Mammary epithelial cell (primary cell): ENCODE measurements at regions of chr11 and their contacts with region 1.

Region 1: GRCh38 chr11:126310228-126310991 is 6.5 kb downstream of the DCPS start:
- DNase-seq: peak; percentile 50
- H3K4me3 ChIP-seq: no peak overlapping the region
- H3K27ac ChIP-seq: no peak overlapping the region
- H3K4me1 ChIP-seq: peaks cover 22% of the 10 kb centered on the region
- H3K27me3 ChIP-seq: no peaks in the 10 kb centered on the region
- CTCF ChIP-seq: peak; percentile 86 to 93

Region 2: GRCh38 chr11:126212089-126212660 is 98.2 kb before region 1 on chr11:
- CTCF ChIA-PET with region 1: no interaction called
- dilution Hi-C with region 1: no loop called
- in situ Hi-C with region 1: no loop called
- intact Hi-C with region 1: no loop called
- DNase-seq: peak; percentile 4
- H3K4me3 ChIP-seq: peak overlapping the region; percentile 87 to 100 (median 99)
- H3K27ac ChIP-seq: peak overlapping the region; percentile 24
- H3K4me1 ChIP-seq: peaks cover 10% of the 10 kb centered on the region
- H3K27me3 ChIP-seq: no peaks in the 10 kb centered on the region
- CTCF ChIP-seq: no peak

Region 3: GRCh38 chr11:126345759-126346585 is 35.6 kb after region 1 on chr11:
- CTCF ChIA-PET with region 1: no interaction called
- dilution Hi-C with region 1: no loop called
- in situ Hi-C with region 1: no loop called
- intact Hi-C with region 1: no loop called
- DNase-seq: no peak
- H3K4me3 ChIP-seq: no peak overlapping the region
- H3K27ac ChIP-seq: no peak overlapping the region
- H3K4me1 ChIP-seq: peaks cover 16% of the 10 kb centered on the region
- H3K27me3 ChIP-seq: no peaks in the 10 kb centered on the region
- CTCF ChIP-seq: no peak

Region 4: DNA sequence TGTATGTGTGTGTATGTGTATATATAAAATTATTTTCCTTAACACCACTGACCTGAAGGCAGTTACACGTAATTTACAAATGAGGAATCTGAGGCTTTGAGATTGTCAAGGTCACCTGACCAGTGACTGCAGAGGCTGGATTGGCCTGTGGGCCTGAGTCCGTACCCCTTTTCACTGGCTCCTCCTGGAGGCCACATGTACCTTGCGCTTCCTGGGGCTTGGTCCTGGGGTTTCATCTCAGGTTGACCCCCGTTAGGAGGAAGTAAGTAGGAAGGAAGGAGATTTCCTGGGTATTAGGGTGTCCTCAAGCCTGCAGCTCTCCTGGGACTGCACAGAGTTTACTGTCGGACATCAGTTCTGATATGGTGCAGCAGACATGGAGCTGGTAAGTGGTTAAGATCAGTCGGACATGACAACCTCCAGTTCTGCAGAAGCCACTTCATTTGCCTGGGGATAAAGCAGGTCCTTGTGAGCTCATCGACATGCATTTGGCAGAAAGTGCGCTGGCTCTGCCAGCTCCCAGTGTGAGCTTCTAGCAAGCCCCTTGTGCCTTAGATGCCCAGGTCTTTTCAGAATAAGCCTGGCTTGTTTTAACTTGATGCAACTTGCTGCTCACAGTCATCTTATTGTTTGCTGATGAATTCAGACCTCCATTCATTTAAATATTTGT is 81.7 kb after region 1 on chr11:
- CTCF ChIA-PET with region 1: no interaction called
- dilution Hi-C with region 1: loop called (anchors 5 kb)
- in situ Hi-C with region 1: no loop called
- intact Hi-C with region 1: loop called (anchors 1 kb)
- DNase-seq: peak; percentile 73
- H3K4me3 ChIP-seq: no peak overlapping the region
- H3K27ac ChIP-seq: no peak overlapping the region
- H3K4me1 ChIP-seq: peaks cover 39% of the 10 kb centered on the region
- H3K27me3 ChIP-seq: no peaks in the 10 kb centered on the region
- CTCF ChIP-seq: no peak

Region 5: DNA sequence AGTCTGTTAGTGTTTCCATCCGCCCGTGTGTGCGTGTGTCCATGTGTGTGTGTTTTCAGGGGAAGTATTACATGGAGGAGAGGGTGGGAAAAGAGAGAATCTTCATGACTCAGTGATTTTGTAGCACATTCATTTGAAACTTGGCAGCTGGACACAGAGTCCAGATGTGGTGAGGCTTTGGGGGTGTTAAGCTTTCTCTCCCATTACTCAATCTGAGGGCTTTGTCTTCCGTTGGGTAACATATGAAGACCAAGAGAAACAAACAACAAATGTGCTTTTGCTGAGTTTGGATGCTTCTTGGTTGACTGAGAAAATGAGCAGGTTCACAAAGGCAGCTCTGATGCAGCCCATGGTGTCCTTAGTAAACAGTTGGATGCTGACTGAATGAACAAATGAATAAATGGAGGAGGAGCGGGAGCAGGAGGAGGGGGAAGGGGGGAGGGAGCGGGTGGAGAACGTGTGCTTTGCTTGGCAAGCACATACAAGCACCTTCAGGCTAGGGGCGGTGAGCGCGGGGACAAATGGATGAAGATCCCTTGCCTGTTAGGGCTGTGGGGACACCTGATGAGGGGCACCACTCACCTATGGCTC is 149.4 kb after region 1 on chr11:
- CTCF ChIA-PET with region 1: no interaction called
- dilution Hi-C with region 1: no loop called
- in situ Hi-C with region 1: no loop called
- intact Hi-C with region 1: no loop called
- DNase-seq: no peak
- H3K4me3 ChIP-seq: no peak overlapping the region
- H3K27ac ChIP-seq: no peak overlapping the region
- H3K4me1 ChIP-seq: no peaks in the 10 kb centered on the region
- H3K27me3 ChIP-seq: no peaks in the 10 kb centered on the region
- CTCF ChIP-seq: no peak

Region 6: GRCh38 chr11:126480410-126481302 is 170.2 kb after region 1 on chr11:
- CTCF ChIA-PET with region 1: interaction called, 21 read pairs
- dilution Hi-C with region 1: no loop called
- in situ Hi-C with region 1: loop called (anchors 10 kb)
- intact Hi-C with region 1: loop called (anchors 1 kb)
- DNase-seq: peak; percentile 70
- H3K4me3 ChIP-seq: no peak overlapping the region
- H3K27ac ChIP-seq: no peak overlapping the region
- H3K4me1 ChIP-seq: peaks cover 4% of the 10 kb centered on the region
- H3K27me3 ChIP-seq: no peaks in the 10 kb centered on the region
- CTCF ChIP-seq: peak; percentile 94 to 97

Region 7: DNA sequence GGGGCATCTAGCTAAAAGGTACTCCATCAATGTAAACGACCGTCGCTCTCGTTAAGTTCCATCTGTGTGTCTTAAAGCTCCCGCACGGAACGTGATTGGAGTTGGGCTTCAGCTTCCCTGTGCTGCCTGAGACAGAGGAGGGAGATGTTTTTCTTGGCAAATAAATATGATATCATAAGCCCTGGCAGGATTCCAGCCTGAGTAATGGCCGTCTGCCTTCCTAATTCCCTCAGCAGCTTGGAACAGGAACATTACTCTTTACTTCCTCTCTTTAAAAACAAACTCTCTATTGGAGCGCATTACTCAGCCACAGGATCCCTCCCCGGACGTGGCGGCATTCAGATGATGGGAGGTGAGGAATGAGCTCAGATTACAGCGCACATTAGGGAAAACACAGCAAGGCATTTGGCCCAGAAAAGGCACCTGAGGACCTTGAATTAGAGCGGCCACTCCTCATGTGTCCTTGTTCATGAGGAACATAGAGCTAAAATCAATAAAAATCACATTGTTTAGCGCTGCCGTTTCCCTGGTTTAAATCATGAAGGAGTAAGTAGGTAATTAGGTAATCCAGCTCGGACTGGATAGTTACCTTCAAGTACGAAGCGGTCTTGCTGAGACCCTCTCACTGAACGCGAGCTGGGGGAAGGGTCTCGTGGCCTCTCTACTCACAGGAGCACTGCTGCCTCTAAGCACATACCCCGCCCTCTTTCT is 275.5 kb after region 1 on chr11:
- CTCF ChIA-PET with region 1: interaction called, 3 read pairs
- dilution Hi-C with region 1: no loop called
- in situ Hi-C with region 1: no loop called
- intact Hi-C with region 1: loop called (anchors 5 kb)
- DNase-seq: peak; percentile 93
- H3K4me3 ChIP-seq: no peak overlapping the region
- H3K27ac ChIP-seq: peak overlapping the region; percentile 43
- H3K4me1 ChIP-seq: peaks cover 10% of the 10 kb centered on the region
- H3K27me3 ChIP-seq: no peaks in the 10 kb centered on the region
- CTCF ChIP-seq: no peak

Region 8: GRCh38 chr11:127345819-127346459 is 1035.5 kb after region 1 on chr11:
- CTCF ChIA-PET with region 1: no interaction called
- dilution Hi-C with region 1: no loop called
- in situ Hi-C with region 1: no loop called
- intact Hi-C with region 1: loop called (anchors 10 kb)
- DNase-seq: peak; percentile 9
- H3K4me3 ChIP-seq: no peak overlapping the region
- H3K27ac ChIP-seq: no peak overlapping the region
- H3K4me1 ChIP-seq: no peaks in the 10 kb centered on the region
- H3K27me3 ChIP-seq: no peaks in the 10 kb centered on the region
- CTCF ChIP-seq: peak; percentile 86